Activated naive CD4-positive, alpha-beta T cell treated with anti-CD3 and anti-CD28 coated beads for 36 hours (primary cell): ENCODE measurements at regions of chr2 and their contacts with region 1.

Region 1: GRCh38 chr2:206693399-206694137 is 24.6 kb downstream of the DYTN start:
- DNase-seq: peak; percentile 48
- H3K4me3 Mint-ChIP-seq: no peak overlapping the region
- H3K27ac Mint-ChIP-seq: no peak overlapping the region
- H3K4me1 Mint-ChIP-seq: peaks cover 3% of the 10 kb centered on the region
- H3K27me3 Mint-ChIP-seq: no peaks in the 10 kb centered on the region

Region 2: DNA sequence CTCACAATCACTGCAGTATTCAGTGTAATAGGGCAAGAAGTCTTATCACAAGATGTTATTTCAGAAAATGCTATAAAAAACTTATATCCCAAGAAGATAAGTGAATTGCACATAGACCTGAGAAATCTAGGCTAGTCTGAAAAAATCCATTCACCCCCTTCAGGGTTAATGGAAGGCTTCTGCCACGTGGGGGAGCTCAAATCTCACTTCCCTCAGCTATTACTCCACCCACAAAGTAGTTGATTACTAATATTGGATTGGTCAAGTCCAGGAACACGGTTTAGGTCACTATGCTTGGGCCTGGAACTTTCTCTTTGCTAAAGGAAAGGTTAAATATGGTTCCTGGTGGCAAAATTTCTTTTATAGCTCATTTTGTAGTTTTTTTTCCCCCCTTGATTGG is 301.4 kb before region 1 on chr2:
- CTCF ChIA-PET with region 1: no interaction called
- intact Hi-C with region 1: loop called (anchors 5 kb)
- DNase-seq: peak; percentile 57
- H3K4me3 Mint-ChIP-seq: no peak overlapping the region
- H3K27ac Mint-ChIP-seq: no peak overlapping the region
- H3K4me1 Mint-ChIP-seq: no peaks in the 10 kb centered on the region
- H3K27me3 Mint-ChIP-seq: no peaks in the 10 kb centered on the region

Region 3: DNA sequence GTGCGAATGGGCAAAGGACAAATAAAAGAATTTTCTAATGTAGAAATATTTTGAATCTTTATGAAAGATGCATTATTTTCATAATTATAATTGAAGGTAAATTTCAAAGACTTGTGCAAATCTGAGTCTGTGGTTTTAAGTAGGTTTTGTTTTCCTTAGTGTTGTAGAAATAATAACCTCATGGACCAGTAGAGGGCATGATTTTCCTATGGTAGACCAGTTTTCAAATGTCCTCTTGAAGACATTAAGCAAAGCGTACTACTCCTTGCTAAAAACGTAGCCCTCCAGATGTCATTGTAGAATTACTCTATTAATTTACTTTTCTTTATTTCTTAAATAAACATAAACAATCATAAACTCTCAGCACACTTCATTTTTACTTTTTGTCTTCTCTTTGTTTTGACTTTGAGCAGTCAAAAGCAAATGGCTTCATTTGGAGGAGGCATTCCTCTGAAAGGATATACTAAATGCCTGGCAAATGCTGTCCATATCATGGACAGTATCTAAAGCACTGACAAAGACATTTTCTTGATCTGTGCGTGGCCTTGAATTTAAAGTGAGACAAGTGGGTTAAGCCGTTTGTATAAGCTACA is 137.1 kb before region 1 on chr2:
- CTCF ChIA-PET with region 1: no interaction called
- intact Hi-C with region 1: loop called (anchors 5 kb)
- DNase-seq: no peak
- H3K4me3 Mint-ChIP-seq: no peak overlapping the region
- H3K27ac Mint-ChIP-seq: no peak overlapping the region
- H3K4me1 Mint-ChIP-seq: peaks cover 13% of the 10 kb centered on the region
- H3K27me3 Mint-ChIP-seq: peaks cover 4% of the 10 kb centered on the region

Region 4: DNA sequence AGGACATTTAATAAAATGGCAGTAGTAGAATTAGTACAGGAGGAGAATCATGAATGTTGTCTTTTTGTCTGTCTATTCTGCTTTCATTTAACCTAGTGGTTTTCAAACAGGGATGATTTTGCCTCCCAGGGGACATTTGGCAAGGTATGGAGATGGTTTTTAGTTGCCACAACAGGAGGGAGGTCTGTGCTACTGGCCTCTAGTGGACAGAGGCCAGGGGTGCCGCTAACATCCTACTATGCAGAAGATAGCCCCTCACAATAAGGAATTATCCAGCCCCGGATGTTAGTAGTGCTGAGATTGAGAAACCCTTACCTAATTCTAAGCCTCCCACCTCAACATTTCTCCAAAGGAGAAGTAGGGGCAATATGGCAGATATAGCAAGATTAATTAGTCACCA is 90.2 kb after region 1 on chr2:
- CTCF ChIA-PET with region 1: interaction called, 15 read pairs
- intact Hi-C with region 1: loop called (anchors 1 kb)
- DNase-seq: no peak
- H3K4me3 Mint-ChIP-seq: no peak overlapping the region
- H3K27ac Mint-ChIP-seq: no peak overlapping the region
- H3K4me1 Mint-ChIP-seq: peaks cover 25% of the 10 kb centered on the region
- H3K27me3 Mint-ChIP-seq: no peaks in the 10 kb centered on the region

Region 5: DNA sequence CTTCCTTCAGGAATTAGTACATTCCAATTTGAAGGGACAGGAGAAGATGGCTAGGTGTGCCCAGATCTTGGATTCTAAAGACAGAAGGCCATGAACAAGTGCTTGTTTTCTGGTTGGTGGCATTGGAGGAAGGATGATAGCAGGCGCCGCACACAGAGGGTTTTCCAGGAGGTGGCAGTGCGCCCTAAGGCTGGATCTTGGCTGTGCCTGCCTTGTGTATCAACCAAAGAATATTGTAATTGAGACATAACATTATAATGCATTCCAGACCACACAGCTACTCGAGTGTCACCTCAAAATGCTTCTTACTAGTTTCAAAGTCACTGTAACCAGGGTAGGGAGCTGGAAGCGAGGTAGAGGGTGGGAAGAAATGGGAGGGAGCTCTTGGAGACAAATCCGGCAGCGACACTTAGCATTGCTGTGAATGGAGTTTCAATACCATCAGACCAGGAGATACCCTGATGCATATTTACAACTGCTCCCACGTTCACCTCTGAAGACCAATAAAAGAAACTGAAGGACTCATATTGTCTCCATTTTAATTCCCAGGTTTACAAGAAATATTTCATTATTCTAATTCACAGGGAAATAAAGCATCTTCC is 288.3 kb after region 1 on chr2:
- CTCF ChIA-PET with region 1: no interaction called
- intact Hi-C with region 1: loop called (anchors 5 kb)
- DNase-seq: peak; percentile 73
- H3K4me3 Mint-ChIP-seq: no peak overlapping the region
- H3K27ac Mint-ChIP-seq: no peak overlapping the region
- H3K4me1 Mint-ChIP-seq: peaks cover 14% of the 10 kb centered on the region
- H3K27me3 Mint-ChIP-seq: no peaks in the 10 kb centered on the region

Region 6: DNA sequence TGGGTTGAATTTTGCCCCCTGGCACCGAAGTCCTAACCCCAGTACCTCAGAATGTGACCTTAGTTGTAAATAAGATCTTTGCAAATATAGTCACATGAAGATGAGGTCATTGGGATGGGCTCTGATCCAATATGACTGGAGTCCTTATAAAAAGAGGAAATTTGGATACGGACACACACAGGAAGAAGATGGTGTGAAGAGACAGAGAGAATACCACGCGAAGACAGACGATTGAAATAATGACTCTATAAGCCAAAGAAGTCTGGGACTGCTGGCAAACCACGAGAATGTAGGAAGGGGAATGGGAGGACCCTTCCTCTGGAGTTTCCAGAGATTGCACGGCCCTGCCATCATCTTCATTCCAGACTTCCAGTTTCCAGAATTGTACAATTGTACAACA is 344.3 kb after region 1 on chr2:
- CTCF ChIA-PET with region 1: no interaction called
- intact Hi-C with region 1: no loop called
- DNase-seq: no peak
- H3K4me3 Mint-ChIP-seq: no peak overlapping the region
- H3K27ac Mint-ChIP-seq: no peak overlapping the region
- H3K4me1 Mint-ChIP-seq: no peaks in the 10 kb centered on the region
- H3K27me3 Mint-ChIP-seq: peaks cover 4% of the 10 kb centered on the region

Region 7: DNA sequence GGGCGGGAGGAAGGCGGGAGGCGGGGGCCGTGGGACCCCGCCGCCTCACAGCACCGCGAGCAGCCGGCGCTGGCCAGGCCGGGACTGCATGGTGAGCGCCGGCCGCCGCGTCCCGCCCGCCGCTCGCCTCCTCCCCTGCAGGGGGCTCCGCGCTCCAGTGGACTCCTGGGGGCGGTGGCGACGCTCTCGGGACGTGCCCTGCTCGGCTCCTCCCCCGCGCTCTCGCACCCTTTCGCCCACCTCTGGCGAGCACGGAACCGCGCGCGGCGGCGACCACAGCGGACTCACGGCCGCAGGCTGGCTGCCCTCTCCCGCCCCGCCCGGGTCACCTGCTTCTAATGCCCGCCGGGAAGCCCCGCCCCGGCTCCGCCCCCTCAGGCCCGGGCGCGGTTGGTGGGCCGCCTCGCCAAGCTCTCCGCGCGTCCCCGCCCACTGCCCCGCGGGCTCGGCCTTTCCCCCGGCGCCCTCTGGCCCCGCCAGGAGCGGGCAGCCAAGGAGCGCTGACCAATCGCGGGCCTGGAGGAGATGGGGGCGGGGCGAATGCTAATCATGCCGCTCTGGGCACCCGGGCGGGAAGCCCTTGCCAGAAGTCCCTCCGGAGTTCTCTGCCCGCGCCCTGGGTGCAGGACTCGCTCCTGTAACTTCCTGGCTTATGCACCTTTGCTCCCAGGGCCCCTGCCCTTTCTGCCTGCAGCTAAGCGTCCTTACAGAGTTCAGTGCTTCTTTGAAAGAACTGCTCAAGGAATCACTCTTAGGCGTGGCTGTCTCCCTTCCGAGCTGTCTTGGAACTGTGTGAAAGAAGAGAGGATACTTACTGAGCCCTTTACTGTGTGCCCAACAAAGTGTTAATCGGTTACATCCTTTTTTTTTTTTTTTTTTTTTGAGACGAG is 1076.3 kb after region 1 on chr2 and contains the start of gene FZD5:
- CTCF ChIA-PET with region 1: no interaction called
- intact Hi-C with region 1: no loop called
- DNase-seq: peak; percentile 91
- H3K4me3 Mint-ChIP-seq: peak within 1 kb of the TSS; percentile 80
- H3K27ac Mint-ChIP-seq: no peak within 1 kb of the TSS
- H3K4me1 Mint-ChIP-seq: peaks cover 31% of the 10 kb centered on the region
- H3K27me3 Mint-ChIP-seq: peaks cover 36% of the 10 kb centered on the region
- total RNA-seq, gene FZD5: 1.5 to 1.7 TPM